PC-9 (cell line): ENCODE measurements at regions of chr11 and their contacts with region 1.

Region 1: DNA sequence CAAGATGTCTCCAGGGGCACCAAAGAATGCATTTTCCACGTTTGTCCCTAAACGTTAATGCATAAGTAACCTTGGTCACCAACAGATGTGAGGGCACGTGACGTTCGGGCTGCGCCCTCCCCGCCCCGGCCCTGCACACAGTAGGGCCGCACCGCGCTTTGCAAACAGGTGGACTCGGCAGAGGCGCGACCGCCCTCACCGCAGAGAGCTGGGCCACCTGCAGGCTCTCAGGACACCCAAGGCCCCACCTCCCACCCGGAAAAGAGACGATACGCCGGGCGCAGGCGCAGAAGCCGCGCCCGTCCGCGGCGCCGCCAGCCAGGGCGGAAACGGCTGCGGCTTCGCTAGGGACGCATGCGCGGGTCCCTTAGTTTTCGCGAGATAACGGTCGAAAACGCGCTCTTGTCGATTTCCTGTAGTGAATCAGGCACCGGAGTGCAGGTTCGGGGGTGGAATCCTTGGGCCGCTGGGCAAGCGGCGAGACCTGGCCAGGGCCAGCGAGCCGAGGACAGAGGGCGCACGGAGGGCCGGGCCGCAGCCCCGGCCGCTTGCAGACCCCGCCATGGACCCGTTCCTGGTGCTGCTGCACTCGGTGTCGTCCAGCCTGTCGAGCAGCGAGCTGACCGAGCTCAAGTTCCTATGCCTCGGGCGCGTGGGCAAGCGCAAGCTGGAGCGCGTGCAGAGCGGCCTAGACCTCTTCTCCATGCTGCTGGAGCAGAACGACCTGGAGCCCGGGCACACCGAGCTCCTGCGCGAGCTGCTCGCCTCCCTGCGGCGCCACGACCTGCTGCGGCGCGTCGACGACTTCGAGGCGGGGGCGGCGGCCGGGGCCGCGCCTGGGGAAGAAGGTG is at the start of gene FADD:
- DNase-seq: peak; percentile 89 to 94
- H3K4me3 ChIP-seq: peak within 1 kb of the TSS; percentile 78
- H3K27ac ChIP-seq: peak within 1 kb of the TSS; percentile 73
- H3K4me1 ChIP-seq: peaks cover 19% of the 10 kb centered on the region
- H3K27me3 ChIP-seq: no peaks in the 10 kb centered on the region
- CTCF ChIP-seq: no peak
- total RNA-seq, gene FADD: 47.8 and 50.5 TPM in 2 replicates

Region 2: GRCh38 chr11:70233034-70233995 is 30.2 kb after region 1 on chr11:
- CTCF ChIA-PET with region 1: interaction called, 4 read pairs
- POLR2A ChIA-PET with region 1: interaction called, 16 read pairs
- intact Hi-C with region 1: no loop called
- DNase-seq: peak; percentile 96 to 100
- H3K4me3 ChIP-seq: no peak overlapping the region
- H3K27ac ChIP-seq: peak overlapping the region; percentile 97
- H3K4me1 ChIP-seq: peaks cover 24% of the 10 kb centered on the region
- H3K27me3 ChIP-seq: no peaks in the 10 kb centered on the region
- CTCF ChIP-seq: no peak

Region 3: DNA sequence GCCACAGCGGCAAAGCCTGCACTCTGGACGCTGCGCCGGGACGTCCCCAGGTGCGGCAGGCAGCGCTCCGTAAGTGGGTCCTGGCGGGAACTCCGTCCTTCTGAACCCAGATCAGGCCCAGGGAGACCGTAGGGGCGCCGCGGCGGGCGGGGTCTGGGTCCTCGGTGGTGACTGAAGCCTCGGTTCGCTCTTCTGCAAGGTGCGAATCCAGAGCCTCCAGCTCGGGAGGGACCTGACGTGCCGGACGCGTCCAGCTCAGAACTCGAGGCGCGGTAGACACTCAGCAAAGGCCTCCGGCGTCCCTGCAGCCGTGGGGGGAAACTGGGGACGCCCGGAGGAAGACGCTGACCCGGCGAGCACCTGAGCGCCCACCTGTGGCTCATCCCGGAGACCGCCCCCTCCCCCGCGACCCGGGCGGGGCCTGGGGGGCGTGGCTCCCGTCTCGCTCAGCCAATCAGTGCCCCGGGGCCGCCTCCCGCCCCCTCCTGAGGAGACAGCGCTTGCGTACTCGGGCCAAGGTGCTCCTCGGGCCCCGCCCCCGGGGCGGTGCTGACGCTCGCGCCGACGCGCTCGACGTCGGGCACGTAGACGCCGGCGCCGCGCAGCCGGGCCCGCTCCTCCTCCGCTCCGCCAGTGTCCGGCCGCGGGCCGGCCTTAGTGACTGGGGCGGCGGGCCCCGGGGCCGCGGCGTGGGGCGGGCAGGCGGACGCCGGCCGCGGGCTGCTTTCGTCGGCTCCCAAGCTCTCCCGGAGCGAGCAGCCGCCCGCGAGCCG is 67.2 kb after region 1 on chr11 and contains the start of gene PPFIA1:
- CTCF ChIA-PET with region 1: interaction called, 11 read pairs
- POLR2A ChIA-PET with region 1: no interaction called
- intact Hi-C with region 1: loop called (anchors 1 kb)
- DNase-seq: peak; percentile 90 to 99
- H3K4me3 ChIP-seq: peak within 1 kb of the TSS; percentile 85
- H3K27ac ChIP-seq: peak within 1 kb of the TSS; percentile 31
- H3K4me1 ChIP-seq: peaks cover 25% of the 10 kb centered on the region
- H3K27me3 ChIP-seq: no peaks in the 10 kb centered on the region
- CTCF ChIP-seq: no peak
- total RNA-seq, gene PPFIA1: 81.1 and 86.8 TPM in 2 replicates

Region 4: GRCh38 chr11:70352601-70353000 is 149.5 kb after region 1 on chr11:
- CTCF ChIA-PET with region 1: no interaction called
- POLR2A ChIA-PET with region 1: interaction called, 21 read pairs
- intact Hi-C with region 1: no loop called
- DNase-seq: no peak
- H3K4me3 ChIP-seq: no peak overlapping the region
- H3K27ac ChIP-seq: no peak overlapping the region
- H3K4me1 ChIP-seq: no peaks in the 10 kb centered on the region
- H3K27me3 ChIP-seq: no peaks in the 10 kb centered on the region
- CTCF ChIP-seq: no peak

Region 5: DNA sequence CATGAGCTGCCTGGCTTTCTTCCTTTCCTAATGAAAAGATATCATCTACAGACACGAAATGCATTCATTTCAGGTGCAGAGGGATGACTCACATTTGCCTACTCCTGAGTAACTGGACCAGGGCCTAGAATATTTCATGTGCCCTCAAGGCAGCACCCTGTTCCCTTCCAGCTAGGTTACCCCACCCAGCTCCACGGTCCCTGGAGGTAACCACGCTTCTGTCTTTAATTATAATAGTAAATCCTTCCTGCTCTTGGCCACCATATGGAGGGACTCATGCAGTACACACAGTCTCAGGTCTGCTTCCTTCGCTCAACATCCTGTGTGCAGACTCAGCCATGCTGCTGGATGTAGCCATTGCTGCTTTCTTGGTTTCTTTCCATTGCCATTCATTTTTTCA is 1222.7 kb after region 1 on chr11:
- CTCF ChIA-PET with region 1: interaction called, 15 read pairs
- POLR2A ChIA-PET with region 1: no interaction called
- intact Hi-C with region 1: no loop called
- DNase-seq: peak; percentile 82 to 92
- H3K4me3 ChIP-seq: no peak overlapping the region
- H3K27ac ChIP-seq: no peak overlapping the region
- H3K4me1 ChIP-seq: peaks cover 18% of the 10 kb centered on the region
- H3K27me3 ChIP-seq: no peaks in the 10 kb centered on the region
- CTCF ChIP-seq: no peak